GM12878 (cell line): ENCODE measurements at regions of chr13 and their contacts with region 1.

Region 1: GRCh38 chr13:46321494-46322225 is 65.4 kb downstream of the RUBCNL start:
- DNase-seq: peak; percentile 24
- ATAC-seq: peak; percentile 95
- H3K4me3 ChIP-seq: no peak overlapping the region
- H3K27ac ChIP-seq: no peak overlapping the region
- H3K4me1 ChIP-seq: no peaks in the 10 kb centered on the region
- H3K27me3 ChIP-seq: no peaks in the 10 kb centered on the region
- CTCF ChIP-seq: peak; percentile 84 to 93 (median 86)
- EP300 ChIP-seq: no peak
- POLR2A ChIP-seq: no peak
- RAD21 ChIP-seq: peak; percentile 96

Region 2: DNA sequence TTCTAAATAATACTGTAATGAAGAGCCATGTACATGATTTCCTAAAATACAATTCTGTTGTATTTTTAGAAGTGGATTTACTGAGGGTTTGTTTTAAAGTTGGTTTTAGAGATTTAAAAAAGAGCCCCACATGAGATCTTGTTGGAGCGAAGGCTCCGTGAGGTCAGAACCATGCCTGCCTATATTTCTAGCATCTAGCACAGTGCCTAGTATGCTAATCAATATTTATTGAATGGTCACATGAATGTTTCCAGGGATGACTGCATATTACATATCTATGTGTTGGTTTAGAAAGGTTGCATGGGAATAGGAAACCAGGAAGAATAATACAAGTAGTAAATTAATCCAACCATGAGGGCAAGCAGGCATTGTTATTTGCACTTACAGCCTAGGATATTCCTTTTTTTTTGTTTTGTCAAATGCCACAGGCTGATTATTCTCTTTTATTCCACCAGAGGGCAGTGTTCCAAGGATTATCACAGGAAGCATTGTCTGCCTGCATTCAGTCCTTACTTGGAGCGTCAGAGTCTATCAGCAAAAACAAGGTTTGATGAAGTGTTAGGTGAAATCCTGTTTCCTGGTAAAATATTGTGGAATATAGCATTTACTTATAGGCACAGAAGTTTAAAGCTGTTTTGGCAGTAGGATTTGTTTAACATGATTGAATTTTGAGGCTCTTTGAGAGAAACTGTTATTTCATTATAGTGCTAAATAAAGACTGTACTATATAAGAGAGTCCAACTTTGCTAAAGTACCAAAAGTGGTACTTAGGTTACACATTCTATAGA is 810.2 kb before region 1 on chr13:
- CTCF ChIA-PET with region 1: no interaction called
- POLR2A ChIA-PET with region 1: no interaction called
- RAD21 ChIA-PET with region 1: no interaction called
- SMC1A ChIA-PET with region 1: interaction called, 3 read pairs
- in situ Hi-C with region 1: no loop called
- intact Hi-C with region 1: loop called (anchors 5 kb)
- DNase-seq: peak; percentile 24
- ATAC-seq: peak; percentile 85
- H3K4me3 ChIP-seq: no peak overlapping the region
- H3K27ac ChIP-seq: no peak overlapping the region
- H3K4me1 ChIP-seq: no peaks in the 10 kb centered on the region
- H3K27me3 ChIP-seq: no peaks in the 10 kb centered on the region
- CTCF ChIP-seq: peak; percentile 60 to 84 (median 67)
- EP300 ChIP-seq: no peak
- POLR2A ChIP-seq: no peak
- RAD21 ChIP-seq: peak; percentile 58

Region 3: GRCh38 chr13:45807520-45808099 is 514.0 kb before region 1 on chr13:
- CTCF ChIA-PET with region 1: interaction called, 9 read pairs
- POLR2A ChIA-PET with region 1: no interaction called
- RAD21 ChIA-PET with region 1: interaction called, 8 read pairs
- SMC1A ChIA-PET with region 1: interaction called, 4 read pairs
- in situ Hi-C with region 1: no loop called
- intact Hi-C with region 1: loop called (anchors 5 kb)
- DNase-seq: peak; percentile 8
- ATAC-seq: peak; percentile 93
- H3K4me3 ChIP-seq: no peak overlapping the region
- H3K27ac ChIP-seq: no peak overlapping the region
- H3K4me1 ChIP-seq: no peaks in the 10 kb centered on the region; the same call in 1 of the 2 replicates
- H3K27me3 ChIP-seq: no peaks in the 10 kb centered on the region
- CTCF ChIP-seq: peak; percentile 54 to 67 (median 58); a peak in 5 of 6 replicates
- EP300 ChIP-seq: no peak
- POLR2A ChIP-seq: no peak
- RAD21 ChIP-seq: peak; percentile 73

Region 4: DNA sequence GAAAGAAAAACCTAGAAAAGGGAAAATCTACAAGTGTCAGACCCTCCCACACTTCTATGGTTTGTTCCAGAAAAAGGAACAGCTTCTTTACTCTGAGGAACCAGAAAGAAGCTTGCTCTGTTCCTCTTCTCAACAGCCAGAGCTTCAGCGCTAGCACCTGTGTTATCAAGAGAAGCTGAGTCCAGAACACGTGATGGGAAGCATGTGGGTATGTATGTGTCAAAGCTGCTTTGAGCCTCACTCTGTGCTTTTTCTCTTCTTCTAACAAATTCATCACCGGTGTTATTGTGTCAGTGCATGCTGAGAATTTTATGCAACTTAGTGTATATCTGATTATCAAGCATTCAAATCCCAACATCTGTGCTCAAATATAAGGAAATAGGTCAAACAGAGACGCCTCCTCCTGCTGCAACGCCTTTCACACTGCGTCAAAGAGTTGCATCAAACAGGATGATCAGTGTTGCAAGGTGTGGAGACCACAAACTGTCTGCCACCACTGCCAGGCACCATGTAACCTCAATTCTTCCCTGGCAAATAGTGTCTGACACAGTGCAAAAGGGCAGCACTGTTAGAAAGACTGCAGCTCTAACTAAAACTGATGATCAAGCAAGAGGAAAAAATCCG is 26.1 kb before region 1 on chr13:
- CTCF ChIA-PET with region 1: interaction called, 12 read pairs
- POLR2A ChIA-PET with region 1: no interaction called
- RAD21 ChIA-PET with region 1: interaction called, 5 read pairs
- SMC1A ChIA-PET with region 1: interaction called, 3 read pairs
- in situ Hi-C with region 1: no loop called
- intact Hi-C with region 1: no loop called
- DNase-seq: peak; percentile 28
- ATAC-seq: peak; percentile 88
- H3K4me3 ChIP-seq: peak overlapping the region; percentile 31; the same call in 1 of the 2 replicates
- H3K27ac ChIP-seq: peak overlapping the region; percentile 17; the same call in 1 of the 2 replicates
- H3K4me1 ChIP-seq: peaks cover 22% of the 10 kb centered on the region
- H3K27me3 ChIP-seq: no peaks in the 10 kb centered on the region
- CTCF ChIP-seq: no peak
- EP300 ChIP-seq: 0 out of 4 replicates have a peak, but pooled peaks of 1 of the 2 experiments have one; percentile 9
- POLR2A ChIP-seq: no peak; the same call in 1 of the 2 replicates
- RAD21 ChIP-seq: no peak

Region 5: GRCh38 chr13:46463719-46464118 is 142.1 kb after region 1 on chr13:
- CTCF ChIA-PET with region 1: no interaction called
- POLR2A ChIA-PET with region 1: no interaction called
- RAD21 ChIA-PET with region 1: no interaction called
- SMC1A ChIA-PET with region 1: no interaction called
- in situ Hi-C with region 1: no loop called
- intact Hi-C with region 1: loop called (anchors 10 kb)
- DNase-seq: no peak
- ATAC-seq: no peak
- H3K4me3 ChIP-seq: no peak overlapping the region
- H3K27ac ChIP-seq: no peak overlapping the region
- H3K4me1 ChIP-seq: no peaks in the 10 kb centered on the region
- H3K27me3 ChIP-seq: no peaks in the 10 kb centered on the region
- CTCF ChIP-seq: no peak
- EP300 ChIP-seq: no peak
- POLR2A ChIP-seq: no peak
- RAD21 ChIP-seq: no peak